Right cardiac atrium (tissue), 5 donors: ENCODE measurements at regions of chr6 and their contacts with region 1.

Region 1: DNA sequence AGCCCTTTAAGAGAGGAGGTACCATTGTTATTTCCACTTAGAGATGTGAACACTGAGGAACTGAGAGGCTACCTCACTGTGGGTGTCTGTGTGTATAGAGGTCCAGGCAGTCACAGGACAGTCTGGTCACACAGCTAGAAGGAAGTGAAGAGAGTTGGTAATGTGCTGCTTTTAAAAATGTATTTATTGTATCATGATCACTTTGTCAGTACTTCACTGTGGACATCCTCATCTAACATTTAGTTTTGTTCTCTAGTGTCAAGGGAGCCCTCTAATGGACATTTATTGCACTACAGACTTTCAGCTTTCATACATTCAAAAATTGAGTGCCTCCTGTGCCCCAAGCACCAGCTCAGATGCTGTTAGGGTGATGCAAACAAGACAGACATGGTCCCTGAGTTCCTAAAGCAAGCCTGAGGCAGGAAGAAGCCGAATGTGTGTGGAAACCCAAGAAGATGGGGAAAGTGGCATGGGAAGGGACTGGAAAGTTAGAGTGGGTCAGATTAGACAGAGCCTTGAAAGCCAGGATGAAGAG is 123.0 kb downstream of the SLC16A10 start:
- DNase-seq: no peak
- ATAC-seq: peak; percentile 28 to 53
- H3K4me3 ChIP-seq: no peak overlapping the region
- H3K27ac ChIP-seq: no peak overlapping the region
- H3K4me1 ChIP-seq: peaks cover 6% of the 10 kb centered on the region
- H3K27me3 ChIP-seq: no peaks in the 10 kb centered on the region

Region 2: DNA sequence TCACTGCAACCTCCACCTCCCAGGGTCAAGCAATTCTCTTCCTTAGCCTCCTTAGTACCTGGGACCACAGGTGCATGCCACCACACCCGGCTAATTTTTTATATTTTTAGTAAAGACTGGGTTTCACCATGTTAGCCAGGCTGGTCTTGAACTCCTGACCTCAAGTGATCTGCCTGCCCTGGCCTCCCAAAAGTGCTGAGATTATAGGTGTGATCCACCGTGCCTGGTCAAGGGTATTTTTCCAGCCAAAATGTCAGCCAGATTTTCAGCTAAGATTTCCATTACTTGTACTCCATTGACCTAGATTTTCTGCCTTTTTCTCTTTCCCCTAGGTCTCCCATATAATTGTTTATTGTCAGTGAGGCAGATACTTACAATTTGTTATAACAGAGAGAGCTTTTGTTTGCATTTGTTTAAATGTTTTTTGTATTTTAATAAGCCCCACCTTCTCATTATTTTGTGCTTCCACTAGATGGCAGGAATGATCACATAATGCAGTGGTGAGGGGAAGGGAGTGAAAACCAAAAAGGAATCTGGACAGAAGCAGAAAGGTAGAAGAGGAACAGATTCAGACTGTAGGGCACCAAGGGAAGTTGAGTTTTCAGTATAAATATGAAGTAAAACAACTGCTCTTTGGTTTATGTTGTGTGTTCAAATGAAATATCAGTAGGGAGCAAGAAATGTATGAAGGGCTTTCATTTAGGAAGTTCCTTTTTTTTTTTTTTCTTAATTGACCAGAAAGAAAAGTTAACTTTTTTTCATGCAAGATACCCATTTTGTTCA is 198.7 kb before region 1 on chr6:
- intact Hi-C with region 1: loop called in 2 of 4 experiments (anchors 5 to 10 kb)
- DNase-seq: no peak
- ATAC-seq: peak; percentile 68 to 75
- H3K4me3 ChIP-seq: no peak overlapping the region
- H3K27ac ChIP-seq: no peak overlapping the region
- H3K4me1 ChIP-seq: no peaks in the 10 kb centered on the region
- H3K27me3 ChIP-seq: no peaks in the 10 kb centered on the region

Region 3: GRCh38 chr6:111030008-111031007 is 180.0 kb before region 1 on chr6:
- intact Hi-C with region 1: loop called in 1 of 4 experiments (anchors 10 kb)
- DNase-seq: peak; percentile 26 to 75 (median 75)
- ATAC-seq: peak; percentile 86 to 92
- H3K4me3 ChIP-seq: no peak overlapping the region
- H3K27ac ChIP-seq: peak overlapping the region; percentile 84
- H3K4me1 ChIP-seq: peaks cover 4% of the 10 kb centered on the region
- H3K27me3 ChIP-seq: no peaks in the 10 kb centered on the region

Region 4: DNA sequence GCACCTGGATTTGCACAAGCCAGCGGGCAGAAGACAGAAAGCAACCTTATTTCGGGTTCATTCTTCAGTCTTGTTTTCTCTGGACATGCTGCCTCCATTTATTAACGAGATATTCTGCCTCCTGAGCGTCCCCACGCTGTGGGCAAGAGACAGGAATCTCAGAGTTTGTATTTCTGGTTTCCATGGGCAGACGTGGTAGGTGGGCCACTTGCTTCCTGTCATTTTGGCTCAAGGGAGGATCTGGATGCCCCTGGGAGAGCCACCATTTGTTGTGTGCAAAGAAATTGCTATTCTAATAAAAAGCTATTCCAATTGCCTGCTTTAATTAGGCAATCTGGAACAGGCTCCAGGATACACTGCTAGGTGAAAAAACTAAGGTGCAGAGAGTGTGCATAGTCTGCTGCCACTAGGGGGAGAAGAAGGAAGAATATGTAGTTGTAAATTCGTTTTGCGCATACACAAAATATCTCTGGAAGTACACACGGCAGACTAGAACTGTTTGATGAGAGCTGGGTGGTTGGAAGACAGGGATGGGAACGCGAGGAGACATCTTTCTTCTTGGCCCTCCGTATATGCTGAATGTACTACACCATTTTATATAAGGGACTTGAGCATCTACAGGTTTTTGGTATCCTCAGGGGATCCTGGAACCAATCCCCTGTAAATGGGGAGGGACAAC is 153.0 kb before region 1 on chr6:
- intact Hi-C with region 1: loop called in 2 of 4 experiments (anchors 10 kb)
- DNase-seq: no peak
- ATAC-seq: peak; percentile 59 to 79
- H3K4me3 ChIP-seq: no peak overlapping the region
- H3K27ac ChIP-seq: no peak overlapping the region
- H3K4me1 ChIP-seq: no peaks in the 10 kb centered on the region
- H3K27me3 ChIP-seq: no peaks in the 10 kb centered on the region

Region 5: DNA sequence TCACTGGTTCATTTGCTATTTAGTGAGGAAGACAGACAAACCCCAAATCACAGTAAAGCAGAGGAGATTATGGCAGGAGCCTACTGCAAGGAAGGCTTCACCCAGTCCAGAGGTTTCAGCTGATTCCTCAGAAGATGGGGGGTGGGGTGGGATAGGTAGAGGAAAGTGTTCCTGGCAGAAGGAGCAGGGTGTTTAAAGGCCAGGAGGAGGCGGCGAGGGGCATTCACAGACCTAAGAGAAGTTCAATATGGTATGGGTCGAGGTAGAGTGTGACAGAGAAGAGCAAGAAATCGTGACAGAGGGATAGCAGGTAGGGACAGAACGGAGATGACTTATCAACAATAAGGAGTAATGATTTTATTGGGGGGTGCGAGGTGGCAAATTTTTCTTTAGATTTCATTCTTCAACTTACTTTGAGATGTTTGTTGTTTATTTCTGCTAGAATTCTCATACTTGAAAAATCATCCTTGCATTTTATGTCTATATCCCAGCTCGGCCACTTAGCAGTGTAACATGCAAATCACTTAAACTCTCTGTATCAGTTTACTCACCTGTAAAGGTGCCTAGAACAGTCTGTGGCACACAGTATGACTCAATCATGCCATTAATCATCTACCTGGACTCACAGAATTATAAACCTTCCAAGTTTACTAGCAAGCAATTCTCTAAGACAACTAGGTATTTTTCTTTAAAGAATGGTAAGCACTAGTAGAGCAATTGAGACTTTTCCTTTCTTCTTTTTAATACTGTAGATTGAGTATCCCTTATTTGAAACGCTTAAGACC is 96.0 kb after region 1 on chr6:
- intact Hi-C with region 1: no loop called
- DNase-seq: no peak
- ATAC-seq: no peak
- H3K4me3 ChIP-seq: no peak overlapping the region
- H3K27ac ChIP-seq: no peak overlapping the region
- H3K4me1 ChIP-seq: no peaks in the 10 kb centered on the region
- H3K27me3 ChIP-seq: no peaks in the 10 kb centered on the region